ENCODE measurements at regions of chr6 and their contacts with region 1.

Region 1: GRCh38 chr6:138944412-138944811 is 43.6 kb downstream of the REPS1 start:
- DNase-seq: no peak
- H3K4me3 Mint-ChIP-seq: no peak overlapping the region
- H3K27ac Mint-ChIP-seq: no peak overlapping the region
- H3K4me1 Mint-ChIP-seq: peaks cover 46% of the 10 kb centered on the region
- H3K27me3 Mint-ChIP-seq: no peaks in the 10 kb centered on the region

Region 2: DNA sequence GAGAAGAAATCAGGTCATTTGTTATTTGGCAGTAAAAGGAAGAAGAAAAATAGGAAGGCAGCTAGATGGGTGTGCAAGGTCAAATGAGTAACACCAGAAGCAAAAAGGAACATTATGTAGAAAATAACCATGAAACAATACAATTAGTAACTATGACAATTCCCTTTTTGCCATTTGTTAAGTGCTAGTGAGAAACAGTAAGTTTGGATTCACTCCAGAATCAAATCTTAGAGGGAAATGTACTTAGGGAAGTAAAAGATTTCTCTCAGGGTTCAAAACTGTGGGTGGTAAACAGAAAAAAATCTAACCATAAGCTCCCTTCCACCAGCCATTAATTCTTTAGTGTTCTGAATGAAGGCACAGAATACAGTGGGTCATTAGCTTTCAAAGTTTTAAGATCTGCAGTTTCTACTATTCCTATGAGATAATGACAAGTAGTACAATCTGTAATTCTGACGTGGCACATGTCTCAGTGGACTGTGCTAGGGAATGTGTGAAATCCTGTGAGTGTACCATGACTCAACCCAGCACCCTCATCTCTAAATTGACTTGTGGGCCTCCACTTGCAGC is 26.5 kb after region 1 on chr6:
- intact Hi-C with region 1: loop called (anchors 2 kb)
- DNase-seq: no peak
- H3K4me3 Mint-ChIP-seq: no peak overlapping the region
- H3K27ac Mint-ChIP-seq: peak overlapping the region; percentile 5
- H3K4me1 Mint-ChIP-seq: peaks cover 40% of the 10 kb centered on the region
- H3K27me3 Mint-ChIP-seq: no peaks in the 10 kb centered on the region

Region 3: GRCh38 chr6:138999954-139000725 is 55.7 kb after region 1 on chr6:
- intact Hi-C with region 1: no loop called
- DNase-seq: no peak
- H3K4me3 Mint-ChIP-seq: no peak overlapping the region
- H3K27ac Mint-ChIP-seq: no peak overlapping the region
- H3K4me1 Mint-ChIP-seq: no peaks in the 10 kb centered on the region
- H3K27me3 Mint-ChIP-seq: peaks cover 6% of the 10 kb centered on the region

Region 4: GRCh38 chr6:139050770-139051313 is 106.4 kb after region 1 on chr6:
- intact Hi-C with region 1: no loop called
- DNase-seq: no peak
- H3K4me3 Mint-ChIP-seq: no peak overlapping the region
- H3K27ac Mint-ChIP-seq: no peak overlapping the region
- H3K4me1 Mint-ChIP-seq: peaks cover 2% of the 10 kb centered on the region
- H3K27me3 Mint-ChIP-seq: peaks cover 3% of the 10 kb centered on the region